ENCODE measurements at regions of chr11 and their contacts with region 1.

Region 1: DNA sequence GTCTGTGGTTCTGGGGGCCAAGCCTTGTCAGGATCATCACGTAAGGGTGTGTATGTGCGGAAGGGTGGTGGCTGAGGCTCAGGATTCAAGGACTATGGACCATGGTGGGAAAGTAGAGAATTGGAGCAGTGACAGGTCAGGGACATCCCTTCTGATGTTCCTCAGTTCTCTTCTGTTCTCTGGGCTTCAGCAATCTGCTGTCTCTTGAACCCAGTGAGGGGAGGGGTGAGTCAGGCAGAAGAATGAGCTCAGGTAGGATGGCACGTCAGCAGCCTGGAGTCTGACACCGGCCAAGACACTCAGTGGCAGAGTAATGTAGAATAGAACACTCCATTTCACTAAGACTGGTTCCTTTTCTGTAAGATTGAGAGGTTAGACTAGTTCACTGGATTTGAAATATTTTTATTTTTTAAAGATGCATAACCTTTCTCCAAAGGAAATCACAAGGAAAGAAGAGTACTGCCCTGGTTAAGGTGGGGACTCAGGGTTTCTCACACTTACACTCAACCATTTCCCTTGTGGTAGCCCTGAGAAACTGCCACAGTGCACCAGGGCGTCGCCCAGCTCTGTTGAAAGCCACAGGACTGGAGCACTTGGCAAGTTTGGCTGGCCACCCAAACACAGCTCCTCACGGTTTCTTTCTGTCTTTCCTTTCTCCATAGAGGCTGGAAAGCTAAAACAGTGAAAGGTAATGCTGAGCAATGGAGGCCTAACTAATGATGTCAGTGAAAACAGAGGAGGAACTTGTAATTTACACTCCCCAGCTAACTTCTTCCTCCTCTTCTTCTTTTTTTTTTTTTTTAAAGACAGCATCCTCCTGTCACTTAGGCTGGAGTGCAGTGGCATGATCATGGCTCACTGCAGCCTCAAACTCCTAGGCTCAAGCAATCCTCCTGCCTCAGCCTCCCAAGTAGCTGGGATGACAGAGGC is 23.1 kb upstream of the MICAL2 start:
- DNase-seq: peak; percentile 87
- H3K4me3 ChIP-seq: peak overlapping the region in 2 of 3 experiments; percentile 27 to 34
- H3K27ac ChIP-seq: peak overlapping the region; percentile 100
- H3K4me1 ChIP-seq: peaks cover 72% of the 10 kb centered on the region
- H3K27me3 ChIP-seq: no peaks in the 10 kb centered on the region
- CTCF ChIP-seq: peak; percentile 18 to 44

Region 2: DNA sequence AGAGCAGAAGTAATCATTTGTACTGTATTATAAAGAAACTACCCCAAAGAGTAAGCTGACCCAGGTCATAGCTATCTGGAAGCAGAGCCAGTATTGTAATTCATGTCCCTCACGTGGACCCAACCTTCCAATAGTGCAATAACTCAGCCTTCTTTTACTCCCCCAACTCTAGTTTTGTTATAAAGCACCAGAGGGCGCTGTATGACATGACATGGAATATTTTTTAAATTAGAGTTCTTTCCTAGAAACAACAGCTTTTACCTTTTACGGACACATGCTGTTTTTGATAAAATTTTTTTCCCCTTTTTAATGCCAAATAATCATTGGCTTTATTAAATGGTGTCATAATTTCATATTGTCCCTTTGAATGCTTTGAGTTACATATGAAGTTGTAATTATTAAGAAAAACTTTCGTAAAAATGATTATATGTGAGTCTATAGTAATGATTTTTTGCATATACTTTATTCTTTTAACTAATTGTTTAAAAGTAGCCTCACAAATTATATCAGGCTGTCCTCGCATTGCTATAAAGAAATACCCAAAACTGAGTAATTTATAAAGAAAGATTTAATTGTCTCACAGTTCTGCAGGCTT is 155.8 kb before region 1 on chr11:
- CTCF ChIA-PET with region 1: no interaction called
- dilution Hi-C with region 1: no loop called
- in situ Hi-C with region 1: no loop called
- intact Hi-C with region 1: loop called (anchors 1 kb)
- DNase-seq: peak; percentile 54
- H3K4me3 ChIP-seq: no peak overlapping the region
- H3K27ac ChIP-seq: peak overlapping the region; percentile 1
- H3K4me1 ChIP-seq: no peaks in the 10 kb centered on the region
- H3K27me3 ChIP-seq: no peaks in the 10 kb centered on the region
- CTCF ChIP-seq: peak; percentile 53 to 60

Region 3: GRCh38 chr11:11946180-11946579 is 141.2 kb before region 1 on chr11:
- CTCF ChIA-PET with region 1: no interaction called
- dilution Hi-C with region 1: no loop called
- in situ Hi-C with region 1: no loop called
- intact Hi-C with region 1: no loop called
- DNase-seq: no peak
- H3K4me3 ChIP-seq: no peak overlapping the region
- H3K27ac ChIP-seq: no peak overlapping the region
- H3K4me1 ChIP-seq: no peaks in the 10 kb centered on the region
- H3K27me3 ChIP-seq: no peaks in the 10 kb centered on the region
- CTCF ChIP-seq: no peak

Region 4: DNA sequence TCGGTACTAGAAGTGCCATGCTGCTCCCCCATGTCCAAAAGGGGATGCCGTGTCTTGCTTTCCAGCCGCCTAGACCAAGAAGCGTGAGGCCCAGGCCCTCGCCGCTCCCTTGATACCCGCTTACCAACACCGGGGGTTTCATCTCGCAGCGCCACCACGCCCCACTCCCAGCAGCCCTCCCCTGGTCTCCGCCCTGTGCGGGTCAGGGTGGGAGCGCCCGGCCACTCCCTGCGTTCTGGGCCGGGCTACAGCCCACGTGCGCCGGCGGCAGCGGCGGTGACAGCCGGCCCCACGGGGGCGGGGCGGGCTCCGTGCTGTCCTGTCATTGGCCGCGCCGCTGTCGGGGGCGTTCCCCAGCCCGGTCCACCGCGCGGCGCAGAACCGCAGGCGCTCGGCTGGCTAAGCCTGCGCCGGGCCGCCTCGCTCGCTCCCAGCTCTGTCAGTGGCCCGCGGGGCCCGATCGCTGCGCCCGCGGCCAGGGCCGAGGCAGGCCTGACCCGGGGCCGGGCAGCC is 22.9 kb after region 1 on chr11 and contains the start of gene MICAL2:
- CTCF ChIA-PET with region 1: no interaction called
- dilution Hi-C with region 1: no loop called
- in situ Hi-C with region 1: no loop called
- intact Hi-C with region 1: loop called (anchors 1 kb)
- DNase-seq: peak; percentile 95
- H3K4me3 ChIP-seq: peak within 1 kb of the TSS; percentile 60 to 81 (median 76)
- H3K27ac ChIP-seq: peak within 1 kb of the TSS; percentile 95
- H3K4me1 ChIP-seq: peaks cover 37% of the 10 kb centered on the region
- H3K27me3 ChIP-seq: no peaks in the 10 kb centered on the region
- CTCF ChIP-seq: no peak
- total RNA-seq, gene MICAL2: 163 to 339 TPM

Region 5: GRCh38 chr11:12167098-12168000 is 80.0 kb after region 1 on chr11:
- CTCF ChIA-PET with region 1: no interaction called
- dilution Hi-C with region 1: no loop called
- in situ Hi-C with region 1: no loop called
- intact Hi-C with region 1: loop called (anchors 2 kb)
- DNase-seq: peak; percentile 98
- H3K4me3 ChIP-seq: no peak overlapping the region
- H3K27ac ChIP-seq: peak overlapping the region; percentile 95
- H3K4me1 ChIP-seq: peaks cover 68% of the 10 kb centered on the region
- H3K27me3 ChIP-seq: no peaks in the 10 kb centered on the region
- CTCF ChIP-seq: no peak

Region 6: DNA sequence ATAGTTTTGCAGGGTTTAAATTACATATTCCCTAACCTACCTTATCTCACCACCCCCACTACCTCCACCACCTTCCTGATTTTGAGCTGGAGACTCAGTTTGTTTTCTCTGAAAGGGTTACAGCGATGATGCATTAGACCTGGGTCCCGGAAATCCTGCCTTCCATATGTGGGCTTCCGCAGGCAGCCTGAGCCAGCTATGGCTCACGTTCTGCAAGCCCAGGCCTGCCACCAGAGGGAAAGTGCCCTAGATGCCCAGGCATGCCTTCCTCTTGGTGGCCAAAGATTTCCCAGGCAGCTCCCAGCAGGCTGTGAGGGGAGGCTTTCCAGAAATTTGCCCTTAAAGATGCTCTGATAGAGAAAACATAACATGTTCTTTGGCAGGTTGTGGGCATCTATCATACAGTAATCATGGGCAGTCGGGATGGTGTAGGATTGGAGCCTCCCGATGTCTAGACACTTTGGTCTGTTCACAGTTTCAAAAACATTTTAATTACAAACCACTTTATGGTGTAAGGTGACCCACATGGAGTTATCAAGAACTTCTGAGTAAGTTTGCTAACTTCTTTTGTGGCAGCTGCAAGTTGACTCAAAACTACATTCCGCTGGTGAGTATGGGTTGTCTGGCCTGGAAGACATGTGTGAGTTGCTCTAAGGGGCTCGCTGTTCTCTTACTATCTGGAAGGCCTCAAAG is 102.3 kb after region 1 on chr11:
- CTCF ChIA-PET with region 1: no interaction called
- dilution Hi-C with region 1: loop called (anchors 5 kb)
- in situ Hi-C with region 1: no loop called
- intact Hi-C with region 1: loop called (anchors 1 kb)
- DNase-seq: peak; percentile 97
- H3K4me3 ChIP-seq: peak overlapping the region in 1 of 3 experiments; percentile 19
- H3K27ac ChIP-seq: peak overlapping the region; percentile 94
- H3K4me1 ChIP-seq: peaks cover 49% of the 10 kb centered on the region
- H3K27me3 ChIP-seq: no peaks in the 10 kb centered on the region
- CTCF ChIP-seq: peak; percentile 20 to 61

Region 7: GRCh38 chr11:12281571-12282478 is 194.5 kb after region 1 on chr11:
- CTCF ChIA-PET with region 1: no interaction called
- dilution Hi-C with region 1: no loop called
- in situ Hi-C with region 1: no loop called
- intact Hi-C with region 1: loop called (anchors 1 kb)
- DNase-seq: peak; percentile 67
- H3K4me3 ChIP-seq: no peak overlapping the region
- H3K27ac ChIP-seq: no peak overlapping the region
- H3K4me1 ChIP-seq: peaks cover 44% of the 10 kb centered on the region
- H3K27me3 ChIP-seq: no peaks in the 10 kb centered on the region
- CTCF ChIP-seq: peak; percentile 93 to 96

Measured in mammary epithelial cell (primary cell).